ENCODE measurements at regions of chr4 and their contacts with region 1.

Region 1: DNA sequence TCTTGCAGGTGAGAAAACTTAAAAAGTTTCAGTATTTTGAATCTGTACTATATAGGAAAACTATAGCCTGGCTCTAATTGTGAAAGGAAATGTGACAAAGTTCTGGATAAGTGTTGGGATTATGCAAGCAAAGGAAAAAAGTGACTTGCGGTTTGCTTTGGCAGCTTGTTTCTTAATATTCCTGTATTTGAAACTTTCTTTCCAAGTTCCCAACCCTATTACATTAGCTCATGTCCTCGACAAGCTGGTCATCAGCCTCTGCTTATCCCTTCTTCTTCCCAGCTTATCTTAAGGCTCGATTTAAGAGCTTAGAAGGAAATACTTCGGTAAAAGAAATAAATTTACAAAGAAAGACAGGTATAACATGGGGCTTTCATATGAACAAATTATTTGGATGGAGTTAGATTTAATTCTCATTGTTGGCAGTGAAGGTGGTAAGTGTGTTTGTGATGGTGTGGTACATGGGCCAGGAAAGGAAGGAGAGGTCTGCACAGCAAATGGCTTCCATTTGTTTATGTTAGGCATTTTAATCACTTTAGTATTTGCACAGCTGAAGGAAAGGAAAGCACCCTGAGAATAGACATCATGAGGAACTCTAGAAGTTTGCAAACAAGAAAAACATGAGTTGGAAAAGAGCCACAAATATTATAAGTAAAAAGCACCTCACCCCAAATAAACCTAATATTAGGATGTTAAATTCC is 5.1 kb upstream of the MYOZ2 start:
- DNase-seq: no peak
- ATAC-seq: peak; percentile 45 to 51
- H3K4me3 ChIP-seq: no peak overlapping the region
- H3K27ac ChIP-seq: peak overlapping the region in 1 of 4 donors; percentile 25
- H3K4me1 ChIP-seq: peaks cover 5 to 16% of the 10 kb centered on the region in 2 donors
- H3K27me3 ChIP-seq: no peaks in the 10 kb centered on the region
- CTCF ChIP-seq: no peak
- POLR2A ChIP-seq: no peak

Region 2: DNA sequence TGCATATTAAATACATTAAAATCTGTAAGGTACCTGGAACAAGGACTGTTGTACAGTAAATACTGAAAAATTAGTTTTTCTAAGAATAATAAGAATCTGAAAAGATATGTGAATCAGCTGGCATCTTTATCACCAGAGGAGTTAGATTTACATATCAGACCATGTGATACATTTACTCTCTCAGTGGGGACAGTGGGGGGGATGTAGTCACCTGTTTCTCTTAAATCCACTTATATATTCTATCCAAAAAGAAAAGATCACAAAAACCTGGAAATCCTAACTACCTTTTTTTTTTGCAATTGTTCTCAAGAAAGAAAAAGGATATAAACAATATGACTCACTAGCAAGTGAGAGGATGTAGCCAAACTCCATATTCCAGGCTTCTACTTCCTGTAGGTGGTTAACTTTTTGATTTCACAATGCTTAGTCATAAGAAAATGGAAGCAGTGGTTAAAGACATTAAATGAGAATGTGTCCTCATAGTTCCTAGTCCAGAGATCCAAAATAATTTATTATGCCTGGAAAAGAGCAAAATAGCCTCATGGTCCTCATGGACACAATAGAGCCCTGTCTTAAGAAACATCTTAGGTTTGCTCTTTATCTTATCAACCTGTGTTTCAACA is 17.4 kb before region 1 on chr4:
- in situ Hi-C with region 1: no loop called
- intact Hi-C with region 1: loop called (anchors 2 kb)
- DNase-seq: no peak
- ATAC-seq: peak; percentile 81 to 89
- H3K4me3 ChIP-seq: no peak overlapping the region
- H3K27ac ChIP-seq: peak overlapping the region; percentile 10 to 58 (median 45)
- H3K4me1 ChIP-seq: peaks cover 0 to 7% of the 10 kb centered on the region in 2 donors
- H3K27me3 ChIP-seq: no peaks in the 10 kb centered on the region
- CTCF ChIP-seq: no peak
- POLR2A ChIP-seq: no peak